HEK293 (cell line): ENCODE measurements at regions of chr1 and their contacts with region 1.

Region 1: GRCh38 chr1:37999430-38000232 is 5.7 kb downstream of the FHL3 start:
- H3K4me3 ChIP-seq: no peak overlapping the region
- H3K27ac ChIP-seq: peak overlapping the region; percentile 40; the same call in 1 of the 2 replicates
- H3K4me1 ChIP-seq: peaks cover 21% of the 10 kb centered on the region
- CTCF ChIP-seq: no peak

Region 2: GRCh38 chr1:37989361-37989930 is 10.2 kb before region 1 on chr1:
- CTCF ChIA-PET with region 1: interaction called, 21 read pairs
- POLR2A ChIA-PET with region 1: interaction called, 9 read pairs
- H3K4me3 ChIP-seq: peak overlapping the region; percentile 76
- H3K27ac ChIP-seq: peak overlapping the region; percentile 46; the same call in 1 of the 2 replicates
- H3K4me1 ChIP-seq: peaks cover 3% of the 10 kb centered on the region; the same call in 1 of the 2 replicates
- CTCF ChIP-seq: no peak

Region 3: DNA sequence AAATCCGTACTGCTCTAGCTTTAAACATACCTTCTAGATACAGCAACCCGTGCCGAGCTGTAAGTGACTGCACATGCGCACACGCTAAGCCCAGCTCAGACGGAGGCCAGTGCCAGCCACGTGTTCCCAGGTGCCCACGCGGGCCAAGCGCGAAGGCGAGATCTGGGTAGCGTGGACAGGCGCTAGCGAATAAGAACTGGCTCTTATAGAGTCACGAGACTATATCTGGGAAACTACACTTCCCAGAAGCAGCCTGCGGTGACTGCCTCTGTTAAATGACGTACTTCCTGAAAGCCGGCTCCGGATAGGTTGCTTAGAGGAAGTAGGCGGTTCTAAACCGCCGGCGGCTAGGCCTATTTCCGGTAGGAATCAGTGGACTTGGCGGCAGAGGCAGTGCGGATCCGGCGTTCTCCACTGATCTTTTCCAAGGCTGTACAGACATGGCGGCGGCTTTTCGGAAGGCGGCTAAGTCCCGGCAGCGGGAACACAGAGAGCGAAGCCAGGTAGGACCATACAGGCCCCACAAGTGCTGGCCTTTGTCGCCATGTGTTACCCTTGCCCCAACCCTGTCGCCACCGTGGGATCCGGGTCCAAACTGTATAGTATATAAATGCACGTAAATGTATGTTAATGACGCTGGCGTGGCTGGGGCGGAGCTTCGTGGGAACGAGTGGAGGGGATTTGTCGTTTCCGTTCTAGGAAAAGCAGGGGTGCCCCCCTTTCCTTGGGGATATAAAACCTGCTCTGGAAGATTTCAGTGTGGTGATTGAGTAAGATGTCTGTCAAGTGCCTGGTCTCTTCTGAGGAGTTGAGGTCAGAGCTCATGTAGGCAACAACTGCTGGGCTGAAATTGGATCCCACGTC is 13.0 kb after region 1 on chr1 and contains the start of gene UTP11:
- CTCF ChIA-PET with region 1: interaction called, 4 read pairs
- POLR2A ChIA-PET with region 1: interaction called, 44 read pairs
- H3K4me3 ChIP-seq: peak within 1 kb of the TSS; percentile 86
- H3K27ac ChIP-seq: peak within 1 kb of the TSS; percentile 89
- H3K4me1 ChIP-seq: no peaks in the 10 kb centered on the region
- CTCF ChIP-seq: no peak